Astrocyte of the cerebellum (primary cell): ENCODE measurements at regions of chr20 and their contacts with region 1.

Region 1: GRCh38 chr20:23419995-23420901 is 1.0 kb downstream of the NAPB start:
- DNase-seq: no peak
- H3K4me3 ChIP-seq: peak overlapping the region; percentile 97
- CTCF ChIP-seq: no peak

Region 2: DNA sequence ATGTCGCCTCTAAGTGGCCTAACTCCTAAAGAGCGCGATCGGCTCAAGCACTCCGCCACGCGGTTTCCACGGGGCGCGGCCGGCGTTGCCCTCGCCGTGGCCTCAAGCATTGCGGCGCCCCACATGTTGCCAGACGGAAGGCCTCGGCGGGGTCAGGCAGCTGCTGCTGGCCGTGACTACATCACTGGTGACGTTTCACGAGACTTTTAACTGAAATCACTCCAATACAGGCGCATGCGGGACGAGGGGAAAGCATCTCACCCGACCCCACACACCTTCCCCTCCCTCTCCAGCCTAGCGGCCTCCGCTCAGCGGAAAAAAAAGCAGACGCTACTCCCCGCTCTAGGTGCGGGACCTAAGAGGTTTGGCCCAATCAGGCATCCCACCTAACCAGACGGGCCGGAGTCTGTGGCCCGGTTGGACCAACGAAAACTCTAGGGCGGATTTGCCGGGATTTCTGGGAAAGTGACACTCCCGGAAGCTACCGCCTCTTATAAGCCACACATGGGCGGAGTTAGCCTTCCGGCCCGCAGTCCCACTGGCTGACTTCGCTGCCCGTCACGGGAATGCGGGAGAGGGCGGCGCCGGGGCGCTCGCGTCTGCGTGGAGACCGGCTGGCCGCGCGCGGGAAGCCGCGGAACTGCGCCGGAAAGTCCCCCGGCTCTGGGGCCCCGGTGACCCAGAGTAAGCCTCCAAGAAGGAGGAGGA is 69.9 kb before region 1 on chr20 and contains the start of gene NXT1:
- in situ Hi-C with region 1: no loop called
- DNase-seq: peak; percentile 97
- H3K4me3 ChIP-seq: peak within 1 kb of the TSS; percentile 97
- CTCF ChIP-seq: no peak

Region 3: DNA sequence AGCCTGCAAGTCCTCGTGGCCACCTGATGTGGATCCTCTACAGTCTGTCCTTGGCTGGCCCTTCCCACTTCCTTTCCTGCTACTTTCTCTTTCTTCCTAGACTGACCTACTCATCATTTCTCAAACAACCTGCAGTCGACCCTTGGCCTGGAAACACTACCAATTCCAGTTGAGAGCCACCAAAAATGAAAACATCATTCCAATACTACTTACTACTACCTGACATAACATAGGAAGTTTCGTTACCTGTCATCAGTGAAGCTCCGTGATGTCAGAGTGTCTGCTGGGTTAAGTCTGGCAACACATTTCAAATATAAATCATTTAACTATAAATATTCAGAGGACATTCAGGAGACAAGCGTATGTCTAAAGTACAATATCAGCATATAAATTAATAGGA is 44.4 kb before region 1 on chr20:
- in situ Hi-C with region 1: loop called (anchors 5 kb)
- DNase-seq: no peak
- H3K4me3 ChIP-seq: no peak overlapping the region
- CTCF ChIP-seq: no peak

Region 4: GRCh38 chr20:23541330-23541729 is 121.1 kb after region 1 on chr20:
- in situ Hi-C with region 1: no loop called
- DNase-seq: no peak
- H3K4me3 ChIP-seq: no peak overlapping the region
- CTCF ChIP-seq: no peak